Cardiac septum (tissue), 1 donor: ENCODE measurements at regions of chr15 and their contacts with region 1.

Region 1: GRCh38 chr15:70936326-70936725 is 43.7 kb downstream of the LRRC49 start:
- DNase-seq: no peak

Region 2: DNA sequence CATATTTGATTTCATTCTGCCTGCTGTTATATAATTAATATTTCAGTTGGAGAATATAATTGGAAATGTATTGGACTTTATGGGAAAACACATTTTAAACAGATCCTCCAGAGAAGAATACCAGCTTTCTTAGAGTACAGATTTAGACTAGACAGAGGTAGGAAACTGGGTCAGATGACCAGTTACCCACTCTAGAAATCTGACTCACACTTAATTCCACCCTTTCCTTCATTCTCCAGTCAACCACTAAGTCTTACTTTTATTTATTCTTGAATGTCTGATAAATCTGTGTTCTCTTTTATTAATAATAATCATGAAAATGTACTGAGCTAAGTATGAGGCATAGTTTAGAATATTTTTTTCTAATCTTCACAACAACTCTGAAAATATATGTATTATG is 67.0 kb after region 1 on chr15:
- intact Hi-C with region 1: loop called (anchors 10 kb)
- DNase-seq: no peak

Region 3: GRCh38 chr15:71302861-71303410 is 366.6 kb after region 1 on chr15:
- intact Hi-C with region 1: no loop called
- DNase-seq: no peak

Region 4: DNA sequence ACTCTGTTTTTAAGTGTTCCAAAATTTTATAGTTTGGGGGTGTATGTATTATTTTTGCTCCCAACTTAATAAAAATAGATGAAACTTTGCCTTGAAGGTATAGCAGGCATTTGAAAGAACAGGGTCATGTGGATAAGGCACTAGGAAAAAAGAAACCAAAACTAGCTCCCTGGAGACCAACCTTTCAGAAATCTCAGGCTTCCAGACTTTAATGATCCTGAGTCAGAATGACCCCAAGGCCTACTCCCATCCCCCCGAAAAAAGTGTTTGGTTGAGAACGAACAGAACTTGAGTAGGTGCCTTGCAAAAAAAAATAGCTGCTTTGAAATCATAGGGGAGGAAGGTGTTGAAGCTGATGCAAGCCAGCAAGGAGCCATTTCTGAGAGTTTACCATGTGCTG is 488.4 kb after region 1 on chr15:
- intact Hi-C with region 1: no loop called
- DNase-seq: no peak